ENCODE measurements at regions of chr16 and their contacts with region 1.

Region 1: DNA sequence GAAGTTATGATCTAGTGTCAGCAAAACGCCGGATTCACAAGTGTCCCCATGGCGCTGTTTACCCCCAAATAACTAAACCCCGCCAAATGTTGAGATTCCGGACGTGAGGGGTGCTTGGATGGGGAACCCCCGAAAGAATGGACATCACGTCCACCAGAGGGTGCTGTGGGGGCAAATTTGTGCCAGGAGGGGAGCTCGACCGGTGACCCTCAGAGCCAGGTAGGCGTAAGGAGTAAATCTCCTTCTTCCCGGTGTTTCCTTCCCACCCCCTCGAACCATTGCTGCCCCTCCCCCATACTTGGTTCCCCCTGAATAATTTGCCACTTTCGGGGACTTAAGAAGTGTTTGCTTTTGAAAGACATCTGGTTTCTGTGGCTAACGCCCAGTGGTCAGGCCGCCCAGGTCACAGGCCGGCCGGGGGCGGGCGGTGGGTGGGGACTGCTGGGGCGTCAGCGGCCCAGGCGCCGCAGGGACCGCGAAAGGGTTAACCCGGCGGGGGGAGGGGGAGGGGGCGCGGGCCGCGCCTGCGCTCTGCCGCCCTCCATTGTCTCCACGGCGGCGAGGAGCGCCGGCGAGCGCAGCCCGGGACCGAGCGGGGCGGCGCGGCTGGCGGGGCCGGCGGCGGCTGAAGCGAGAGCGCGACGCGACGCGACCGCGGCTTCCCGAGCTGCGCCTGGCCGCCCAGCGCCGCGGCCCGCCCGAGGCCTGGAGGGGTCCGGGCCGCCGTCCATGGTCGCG is at the start of gene ZNRF1:
- DNase-seq: peak; percentile 84
- H3K4me3 Mint-ChIP-seq: peak within 1 kb of the TSS; percentile 73
- H3K27ac Mint-ChIP-seq: no peak within 1 kb of the TSS
- H3K4me1 Mint-ChIP-seq: peaks cover 19% of the 10 kb centered on the region
- H3K27me3 Mint-ChIP-seq: no peaks in the 10 kb centered on the region
- CTCF ChIP-seq: peak; percentile 84
- total RNA-seq, gene ZNRF1: 8.3 and 10.5 TPM in 2 replicates

Region 2: GRCh38 chr16:74984535-74985296 is 13.9 kb before region 1 on chr16 and contains the start of gene WDR59:
- CTCF ChIA-PET with region 1: interaction called, 11 read pairs
- POLR2A ChIA-PET with region 1: interaction called, 7 read pairs
- intact Hi-C with region 1: no loop called
- DNase-seq: peak; percentile 100
- H3K4me3 Mint-ChIP-seq: peak within 1 kb of the TSS; percentile 82
- H3K27ac Mint-ChIP-seq: peak within 1 kb of the TSS; percentile 89
- H3K4me1 Mint-ChIP-seq: no peaks in the 10 kb centered on the region
- H3K27me3 Mint-ChIP-seq: no peaks in the 10 kb centered on the region
- CTCF ChIP-seq: no peak
- total RNA-seq, gene WDR59: 53.8 and 56.1 TPM in 2 replicates

Region 3: DNA sequence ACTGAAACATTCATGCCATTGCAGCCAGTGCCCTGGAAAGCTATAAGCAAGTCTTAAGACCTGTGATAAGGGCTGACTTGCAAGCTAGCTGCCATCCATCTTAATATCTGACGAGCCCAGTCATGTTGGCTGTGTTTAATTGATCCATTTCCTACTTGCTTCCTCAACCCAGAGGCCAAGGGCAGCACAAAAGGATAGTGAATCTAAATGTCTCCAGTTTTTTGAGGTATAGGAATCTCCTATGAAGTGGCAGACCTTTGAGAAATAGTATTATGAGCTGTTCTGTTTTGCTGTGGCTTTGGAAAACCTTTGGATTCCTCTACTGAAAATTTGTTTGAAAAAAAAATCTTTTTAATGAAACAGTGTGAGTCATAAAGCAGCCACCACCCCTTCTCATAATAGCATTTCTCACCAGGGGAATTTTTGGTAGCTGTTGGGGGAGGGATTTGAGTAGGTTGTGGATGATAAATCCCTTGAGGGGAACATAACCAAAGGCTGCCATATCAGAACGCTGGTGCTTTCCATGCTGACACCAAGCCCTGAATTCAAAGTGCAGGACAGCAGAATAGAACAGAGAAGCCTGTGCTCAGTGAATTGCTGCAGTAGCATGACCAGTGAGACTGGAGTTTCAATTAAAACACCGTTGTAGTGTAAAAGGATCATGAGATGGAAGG is 13.1 kb after region 1 on chr16:
- CTCF ChIA-PET with region 1: interaction called, 25 read pairs
- POLR2A ChIA-PET with region 1: interaction called, 18 read pairs
- intact Hi-C with region 1: no loop called
- DNase-seq: peak; percentile 92
- H3K4me3 Mint-ChIP-seq: peak overlapping the region; percentile 37
- H3K27ac Mint-ChIP-seq: peak overlapping the region; percentile 81
- H3K4me1 Mint-ChIP-seq: peaks cover 17% of the 10 kb centered on the region
- H3K27me3 Mint-ChIP-seq: no peaks in the 10 kb centered on the region
- CTCF ChIP-seq: no peak

Region 4: DNA sequence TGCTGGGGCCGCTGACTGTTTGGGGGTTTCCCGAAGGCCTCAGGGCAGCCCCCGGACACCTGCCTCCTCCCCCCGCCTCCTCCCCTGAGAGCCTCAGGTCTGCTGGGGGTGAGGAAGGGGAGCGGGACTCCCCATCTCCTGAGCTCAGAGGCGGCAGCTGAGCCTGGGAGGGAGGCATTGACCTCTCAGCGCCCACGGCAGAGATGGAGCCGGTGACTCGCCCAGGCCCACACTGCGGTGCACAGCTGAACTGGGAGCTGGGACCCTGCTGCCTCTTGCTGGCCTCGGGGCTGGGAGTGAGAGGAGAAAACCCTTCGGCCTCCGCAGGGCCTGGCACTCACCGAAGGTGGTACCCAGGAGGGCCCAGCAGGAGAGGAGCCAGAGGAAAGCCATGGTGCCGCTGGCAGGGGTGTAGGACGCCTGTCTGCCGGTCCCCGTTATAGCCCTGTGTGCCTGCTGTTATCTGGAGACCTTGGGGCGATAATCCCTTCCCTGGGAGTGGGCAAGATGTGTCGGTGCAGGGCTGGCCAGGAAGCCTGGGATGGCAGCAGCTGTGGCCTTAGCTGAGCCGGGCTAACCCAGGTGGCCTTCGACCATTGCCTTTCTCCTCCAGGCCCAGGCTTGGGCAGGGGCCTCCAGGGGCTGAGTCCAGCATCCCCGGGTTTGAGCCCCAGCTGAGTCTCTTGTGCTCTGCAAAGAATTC is 208.2 kb after region 1 on chr16 and contains the start of gene CTRB2:
- CTCF ChIA-PET with region 1: no interaction called
- POLR2A ChIA-PET with region 1: no interaction called
- intact Hi-C with region 1: loop called (anchors 5 kb)
- DNase-seq: no peak
- H3K4me3 Mint-ChIP-seq: no peak within 1 kb of the TSS
- H3K27ac Mint-ChIP-seq: no peak within 1 kb of the TSS
- H3K4me1 Mint-ChIP-seq: no peaks in the 10 kb centered on the region
- H3K27me3 Mint-ChIP-seq: no peaks in the 10 kb centered on the region
- CTCF ChIP-seq: no peak
- total RNA-seq, gene CTRB2: not detected in 2 replicates

Measured in MCF 10A (cell line).